CD4-positive, alpha-beta T cell (primary cell): ENCODE measurements at regions of chr1 and their contacts with region 1.

Region 1: GRCh38 chr1:213669964-213670691 is 317.6 kb upstream of the PROX1 start:
- DNase-seq: peak; percentile 20 to 78 (median 36)
- ATAC-seq: peak; percentile 89
- H3K4me3 ChIP-seq: no peak overlapping the region
- H3K4me3 Mint-ChIP-seq: peak overlapping the region; percentile 40
- H3K27ac ChIP-seq: no peak overlapping the region
- H3K27ac Mint-ChIP-seq: peak overlapping the region; percentile 88
- H3K4me1 ChIP-seq: peaks cover 13% of the 10 kb centered on the region
- H3K4me1 Mint-ChIP-seq: peaks cover 38% of the 10 kb centered on the region
- H3K27me3 ChIP-seq: no peaks in the 10 kb centered on the region
- H3K27me3 Mint-ChIP-seq: no peaks in the 10 kb centered on the region
- CTCF ChIP-seq: peak; percentile 49

Region 2: GRCh38 chr1:213244664-213245091 is 425.4 kb before region 1 on chr1:
- CTCF ChIA-PET with region 1: no interaction called
- POLR2A ChIA-PET with region 1: no interaction called
- intact Hi-C with region 1: loop called in 1 of 2 experiments (anchors 10 kb)
- DNase-seq: peak in 5 of 14 experiments; percentile 2 to 62 (median 38)
- ATAC-seq: no peak
- H3K4me3 ChIP-seq: no peak overlapping the region
- H3K4me3 Mint-ChIP-seq: no peak overlapping the region
- H3K27ac ChIP-seq: no peak overlapping the region
- H3K27ac Mint-ChIP-seq: no peak overlapping the region
- H3K4me1 ChIP-seq: no peaks in the 10 kb centered on the region
- H3K4me1 Mint-ChIP-seq: no peaks in the 10 kb centered on the region
- H3K27me3 ChIP-seq: no peaks in the 10 kb centered on the region
- H3K27me3 Mint-ChIP-seq: no peaks in the 10 kb centered on the region
- CTCF ChIP-seq: peak; percentile 98

Region 3: DNA sequence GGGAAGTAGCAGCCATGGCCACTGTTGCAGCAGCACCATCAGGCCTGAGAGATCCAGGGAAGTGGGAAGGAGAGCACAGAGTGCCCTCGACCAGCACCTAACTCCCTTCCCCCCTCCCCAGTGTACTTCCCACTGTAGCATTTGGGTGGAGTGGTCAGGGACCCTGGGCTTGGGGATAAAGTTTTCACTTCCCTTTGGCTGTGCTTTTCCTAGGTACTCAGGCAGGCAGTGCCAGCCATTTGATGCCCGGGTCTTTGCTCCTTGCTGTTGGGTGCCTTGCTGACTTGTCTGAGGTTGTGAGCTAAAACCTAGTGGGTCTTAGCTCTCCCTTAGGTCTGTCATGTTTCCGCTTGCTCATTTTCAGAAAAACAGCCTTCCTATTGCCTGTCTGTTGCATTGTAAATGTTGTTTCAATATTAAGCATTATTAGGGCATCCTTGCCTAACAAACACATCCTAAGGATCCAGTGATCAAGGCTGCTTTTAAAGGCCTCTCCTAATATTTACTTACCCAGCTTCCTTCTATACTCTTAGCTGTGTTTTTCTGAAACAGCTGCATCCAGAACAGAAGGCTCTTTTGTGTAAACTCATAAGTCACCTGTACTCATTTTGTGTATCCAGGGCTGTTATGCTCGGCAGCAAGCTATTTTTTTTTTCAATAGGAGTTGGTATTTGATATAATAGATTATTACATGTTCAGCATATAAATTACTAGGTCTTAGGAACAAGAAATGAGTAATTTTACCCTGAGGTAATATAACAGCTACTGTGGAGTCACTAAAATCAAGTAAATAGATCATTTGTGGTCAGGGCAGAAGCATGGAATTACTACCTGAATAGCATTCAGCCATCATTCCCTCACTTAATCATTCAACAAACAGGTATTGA is 101.0 kb before region 1 on chr1:
- CTCF ChIA-PET with region 1: no interaction called
- POLR2A ChIA-PET with region 1: no interaction called
- intact Hi-C with region 1: no loop called
- DNase-seq: no peak
- ATAC-seq: no peak
- H3K4me3 ChIP-seq: no peak overlapping the region
- H3K4me3 Mint-ChIP-seq: no peak overlapping the region
- H3K27ac ChIP-seq: no peak overlapping the region
- H3K27ac Mint-ChIP-seq: no peak overlapping the region
- H3K4me1 ChIP-seq: no peaks in the 10 kb centered on the region
- H3K4me1 Mint-ChIP-seq: no peaks in the 10 kb centered on the region
- H3K27me3 ChIP-seq: no peaks in the 10 kb centered on the region
- H3K27me3 Mint-ChIP-seq: peaks cover 12% of the 10 kb centered on the region
- CTCF ChIP-seq: no peak

Region 4: DNA sequence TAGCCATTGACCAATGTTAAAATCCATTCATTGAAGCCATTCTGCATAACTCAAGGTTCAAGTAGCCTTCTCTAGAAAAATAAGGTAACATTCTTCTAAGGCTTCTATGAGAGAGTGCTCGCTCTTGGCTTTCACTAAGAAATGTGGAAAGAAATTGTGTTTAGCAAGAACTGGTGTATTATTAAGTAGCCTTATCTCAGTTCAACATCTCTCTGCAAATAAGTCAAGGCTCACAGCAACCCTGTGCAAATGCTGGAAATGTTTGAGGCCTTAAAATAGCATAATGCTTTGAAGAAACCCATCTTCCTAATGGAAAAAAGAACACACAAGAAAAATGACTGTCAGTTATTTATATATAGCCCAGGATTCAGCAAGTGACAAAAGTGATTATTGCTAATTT is 63.6 kb after region 1 on chr1:
- CTCF ChIA-PET with region 1: no interaction called
- POLR2A ChIA-PET with region 1: no interaction called
- intact Hi-C with region 1: no loop called
- DNase-seq: no peak
- ATAC-seq: no peak
- H3K4me3 ChIP-seq: no peak overlapping the region
- H3K4me3 Mint-ChIP-seq: no peak overlapping the region
- H3K27ac ChIP-seq: no peak overlapping the region
- H3K27ac Mint-ChIP-seq: no peak overlapping the region
- H3K4me1 ChIP-seq: no peaks in the 10 kb centered on the region
- H3K4me1 Mint-ChIP-seq: no peaks in the 10 kb centered on the region
- H3K27me3 ChIP-seq: no peaks in the 10 kb centered on the region
- H3K27me3 Mint-ChIP-seq: no peaks in the 10 kb centered on the region
- CTCF ChIP-seq: no peak

Region 5: DNA sequence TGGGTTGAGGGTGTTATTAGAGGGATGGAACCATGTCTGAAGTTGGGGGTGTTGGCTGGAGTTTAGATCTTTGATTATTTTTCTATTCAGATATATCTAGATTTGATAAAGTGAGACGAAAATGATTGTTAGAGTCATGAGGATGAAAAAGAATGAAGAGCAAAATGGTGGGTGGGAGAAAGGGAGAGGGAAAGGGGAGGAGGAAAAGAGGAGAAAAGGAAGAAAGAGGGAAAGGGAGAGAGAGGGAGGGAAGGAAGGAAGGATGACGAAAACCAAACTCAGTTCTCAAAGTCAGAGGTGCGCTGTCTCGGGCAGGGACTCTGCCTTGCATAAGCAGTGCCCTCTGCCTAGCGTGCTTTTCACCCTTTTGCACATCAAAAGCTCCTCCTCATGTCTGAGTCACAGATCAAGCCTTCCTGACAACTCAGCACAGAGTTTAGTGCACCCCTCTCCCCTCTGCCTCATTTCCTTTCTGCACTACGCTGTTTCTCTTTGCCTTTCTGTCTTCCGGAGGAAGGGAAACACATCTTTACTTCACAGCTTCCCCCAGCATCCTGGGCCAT is 91.8 kb after region 1 on chr1:
- CTCF ChIA-PET with region 1: no interaction called
- POLR2A ChIA-PET with region 1: interaction called, 7 read pairs
- intact Hi-C with region 1: loop called in 1 of 2 experiments (anchors 1 kb)
- DNase-seq: peak; percentile 15 to 69 (median 41)
- ATAC-seq: peak; percentile 100
- H3K4me3 ChIP-seq: no peak overlapping the region
- H3K4me3 Mint-ChIP-seq: peak overlapping the region; percentile 49
- H3K27ac ChIP-seq: no peak overlapping the region
- H3K27ac Mint-ChIP-seq: peak overlapping the region; percentile 77
- H3K4me1 ChIP-seq: peaks cover 11% of the 10 kb centered on the region
- H3K4me1 Mint-ChIP-seq: peaks cover 16% of the 10 kb centered on the region
- H3K27me3 ChIP-seq: no peaks in the 10 kb centered on the region
- H3K27me3 Mint-ChIP-seq: no peaks in the 10 kb centered on the region
- CTCF ChIP-seq: no peak

Region 6: GRCh38 chr1:213858581-213858980 is 188.5 kb after region 1 on chr1:
- CTCF ChIA-PET with region 1: no interaction called
- POLR2A ChIA-PET with region 1: no interaction called
- intact Hi-C with region 1: loop called (anchors 2 to 10 kb)
- DNase-seq: no peak
- ATAC-seq: no peak
- H3K4me3 ChIP-seq: no peak overlapping the region
- H3K4me3 Mint-ChIP-seq: no peak overlapping the region
- H3K27ac ChIP-seq: no peak overlapping the region
- H3K27ac Mint-ChIP-seq: no peak overlapping the region
- H3K4me1 ChIP-seq: peaks cover 4% of the 10 kb centered on the region
- H3K4me1 Mint-ChIP-seq: peaks cover 7% of the 10 kb centered on the region
- H3K27me3 ChIP-seq: no peaks in the 10 kb centered on the region
- H3K27me3 Mint-ChIP-seq: no peaks in the 10 kb centered on the region
- CTCF ChIP-seq: no peak

Region 7: DNA sequence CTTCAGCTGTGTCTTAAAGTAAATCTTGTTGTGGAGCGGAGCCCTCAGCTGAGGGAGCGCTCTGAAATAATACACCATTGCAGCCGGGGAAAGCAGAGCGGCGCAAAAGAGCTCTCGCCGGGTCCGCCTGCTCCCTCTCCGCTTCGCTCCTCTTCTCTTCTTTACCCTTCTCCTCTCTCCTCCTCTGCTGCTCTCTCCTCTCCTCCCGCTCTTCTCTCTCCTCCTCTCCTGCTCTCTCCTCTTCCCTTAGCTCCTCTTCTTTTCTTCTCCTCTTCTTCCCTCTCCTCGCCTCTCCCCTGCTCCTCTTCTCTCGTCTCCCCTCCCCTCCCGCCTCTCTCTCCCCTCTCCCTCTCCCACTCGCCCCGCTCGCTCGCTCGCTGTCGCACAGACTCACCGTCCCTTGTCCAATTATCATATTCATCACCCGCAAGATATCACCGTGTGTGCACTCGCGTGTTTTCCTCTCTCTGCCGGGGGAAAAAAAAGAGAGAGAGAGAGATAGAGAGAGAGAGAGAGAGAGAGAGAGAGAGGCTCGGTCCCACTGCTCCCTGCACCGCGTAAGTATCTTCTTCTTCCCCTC is 317.9 kb after region 1 on chr1 and contains the start of gene PROX1:
- CTCF ChIA-PET with region 1: no interaction called
- POLR2A ChIA-PET with region 1: interaction called, 5 read pairs
- intact Hi-C with region 1: loop called (anchors 1 to 5 kb)
- DNase-seq: peak in 10 of 14 experiments; percentile 21 to 70 (median 44)
- ATAC-seq: peak; percentile 87
- H3K4me3 ChIP-seq: peak within 1 kb of the TSS; percentile 44
- H3K4me3 Mint-ChIP-seq: peak within 1 kb of the TSS; percentile 92
- H3K27ac ChIP-seq: no peak within 1 kb of the TSS
- H3K27ac Mint-ChIP-seq: peak within 1 kb of the TSS; percentile 85
- H3K4me1 ChIP-seq: peaks cover 42% of the 10 kb centered on the region
- H3K4me1 Mint-ChIP-seq: peaks cover 58% of the 10 kb centered on the region
- H3K27me3 ChIP-seq: peaks cover 69 to 97% of the 10 kb centered on the region in 2 experiments
- H3K27me3 Mint-ChIP-seq: peaks cover 100% of the 10 kb centered on the region
- CTCF ChIP-seq: no peak
- total RNA-seq, gene PROX1: 0.03 TPM in 1 of 2 experiments, not detected in the other